ENCODE measurements at regions of chr12 and their contacts with region 1.

Region 1: GRCh38 chr12:121626087-121626852 is at the start of gene ORAI1:
- DNase-seq: peak; percentile 91 to 98 (median 95)
- ATAC-seq: peak; percentile 70
- H3K4me3 ChIP-seq: peak within 1 kb of the TSS; percentile 89
- H3K4me3 Mint-ChIP-seq: peak within 1 kb of the TSS; percentile 99
- H3K27ac ChIP-seq: peak within 1 kb of the TSS; percentile 90 to 96
- H3K27ac Mint-ChIP-seq: peak within 1 kb of the TSS; percentile 99
- H3K4me1 ChIP-seq: peaks cover 52% of the 10 kb centered on the region
- H3K4me1 Mint-ChIP-seq: peaks cover 53% of the 10 kb centered on the region
- H3K27me3 ChIP-seq: no peaks in the 10 kb centered on the region
- H3K27me3 Mint-ChIP-seq: no peaks in the 10 kb centered on the region
- CTCF ChIP-seq: no peak
- total RNA-seq, gene ORAI1: 39.7 to 42.3 TPM

Region 2: GRCh38 chr12:121467115-121467793 is 159.0 kb before region 1 on chr12:
- CTCF ChIA-PET with region 1: no interaction called
- POLR2A ChIA-PET with region 1: interaction called, 4 read pairs
- intact Hi-C with region 1: loop called in 1 of 2 experiments (anchors 1 kb)
- DNase-seq: peak; percentile 73 to 95 (median 88)
- ATAC-seq: peak; percentile 87
- H3K4me3 ChIP-seq: peak overlapping the region; percentile 49
- H3K4me3 Mint-ChIP-seq: no peak overlapping the region
- H3K27ac ChIP-seq: peak overlapping the region in 1 of 2 donors; percentile 43
- H3K27ac Mint-ChIP-seq: no peak overlapping the region
- H3K4me1 ChIP-seq: peaks cover 35% of the 10 kb centered on the region
- H3K4me1 Mint-ChIP-seq: peaks cover 39% of the 10 kb centered on the region
- H3K27me3 ChIP-seq: no peaks in the 10 kb centered on the region
- H3K27me3 Mint-ChIP-seq: no peaks in the 10 kb centered on the region
- CTCF ChIP-seq: no peak

Region 3: DNA sequence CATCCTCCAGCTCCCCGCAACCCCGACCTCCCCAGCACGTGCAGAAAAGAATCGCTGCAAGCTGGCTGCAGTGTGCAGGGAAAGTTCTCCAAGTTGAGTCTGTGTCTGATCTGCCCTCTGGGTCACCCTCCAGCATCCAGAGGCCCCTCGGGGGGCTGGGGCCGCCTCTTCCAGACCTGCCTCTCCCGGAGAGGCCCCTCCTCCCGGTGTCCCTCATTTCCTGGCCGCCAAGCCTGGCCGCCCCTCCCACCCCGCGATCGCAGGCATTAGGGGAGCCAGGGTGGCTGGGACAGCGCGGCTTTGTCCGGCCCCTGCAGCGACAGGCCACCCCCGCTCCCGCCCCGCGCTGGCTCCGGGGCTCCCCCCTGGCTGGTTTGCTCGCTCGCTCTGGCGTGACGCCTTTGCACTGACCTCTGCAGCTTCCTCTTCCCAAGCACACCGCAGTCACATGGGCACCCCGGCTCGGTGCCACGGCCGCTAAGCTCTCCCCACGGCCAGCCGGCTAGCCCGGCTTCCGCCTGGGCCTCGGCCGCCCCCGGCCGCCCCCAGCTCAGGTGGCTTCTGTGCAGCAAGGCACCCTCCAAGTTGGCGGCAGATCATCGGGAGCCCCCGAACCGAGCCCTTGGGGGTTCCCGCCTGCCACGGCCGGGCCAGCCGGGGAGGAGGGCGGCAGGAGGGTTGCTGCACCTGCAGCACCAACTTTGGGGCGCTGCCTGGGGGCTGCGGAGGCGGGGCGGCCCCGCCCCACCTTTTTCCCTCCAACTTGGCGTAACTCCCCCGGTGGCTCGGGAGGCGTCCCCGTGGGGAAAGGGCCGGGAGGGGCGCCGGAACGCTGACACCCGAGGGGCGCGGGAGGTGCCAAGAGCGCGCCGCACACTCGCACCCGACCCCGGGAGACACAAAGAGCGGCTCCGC is 89.1 kb before region 1 on chr12:
- CTCF ChIA-PET with region 1: interaction called, 5 read pairs
- POLR2A ChIA-PET with region 1: interaction called, 16 read pairs
- intact Hi-C with region 1: loop called in 1 of 2 experiments (anchors 1 kb)
- DNase-seq: peak in 13 of 14 experiments; percentile 16 to 84 (median 37)
- ATAC-seq: peak; percentile 10
- H3K4me3 ChIP-seq: peak overlapping the region; percentile 58
- H3K4me3 Mint-ChIP-seq: peak overlapping the region; percentile 94
- H3K27ac ChIP-seq: peak overlapping the region; percentile 67 to 80
- H3K27ac Mint-ChIP-seq: peak overlapping the region; percentile 93
- H3K4me1 ChIP-seq: peaks cover 60% of the 10 kb centered on the region
- H3K4me1 Mint-ChIP-seq: peaks cover 44% of the 10 kb centered on the region
- H3K27me3 ChIP-seq: no peaks in the 10 kb centered on the region
- H3K27me3 Mint-ChIP-seq: no peaks in the 10 kb centered on the region
- CTCF ChIP-seq: no peak

Region 4: GRCh38 chr12:121579981-121580868 is 46.0 kb before region 1 on chr12:
- CTCF ChIA-PET with region 1: interaction called, 20 read pairs
- POLR2A ChIA-PET with region 1: interaction called, 116 read pairs
- intact Hi-C with region 1: loop called (anchors 1 kb)
- DNase-seq: peak; percentile 64 to 89 (median 78)
- ATAC-seq: peak; percentile 64
- H3K4me3 ChIP-seq: peak overlapping the region; percentile 63
- H3K4me3 Mint-ChIP-seq: peak overlapping the region; percentile 98
- H3K27ac ChIP-seq: peak overlapping the region; percentile 62 to 79
- H3K27ac Mint-ChIP-seq: peak overlapping the region; percentile 98
- H3K4me1 ChIP-seq: peaks cover 52% of the 10 kb centered on the region
- H3K4me1 Mint-ChIP-seq: peaks cover 55% of the 10 kb centered on the region
- H3K27me3 ChIP-seq: no peaks in the 10 kb centered on the region
- H3K27me3 Mint-ChIP-seq: no peaks in the 10 kb centered on the region
- CTCF ChIP-seq: no peak

Region 5: GRCh38 chr12:121649819-121650353 is 23.6 kb after region 1 on chr12:
- CTCF ChIA-PET with region 1: interaction called, 3 read pairs
- POLR2A ChIA-PET with region 1: interaction called, 24 read pairs
- intact Hi-C with region 1: no loop called
- DNase-seq: peak in 3 of 14 experiments; percentile 68 to 79 (median 77)
- ATAC-seq: peak; percentile 67
- H3K4me3 ChIP-seq: no peak overlapping the region
- H3K4me3 Mint-ChIP-seq: no peak overlapping the region
- H3K27ac ChIP-seq: no peak overlapping the region
- H3K27ac Mint-ChIP-seq: peak overlapping the region; percentile 71
- H3K4me1 ChIP-seq: peaks cover 47% of the 10 kb centered on the region
- H3K4me1 Mint-ChIP-seq: peaks cover 27% of the 10 kb centered on the region
- H3K27me3 ChIP-seq: no peaks in the 10 kb centered on the region
- H3K27me3 Mint-ChIP-seq: no peaks in the 10 kb centered on the region
- CTCF ChIP-seq: no peak

Region 6: GRCh38 chr12:121678716-121679580 is 52.7 kb after region 1 on chr12:
- CTCF ChIA-PET with region 1: interaction called, 3 read pairs
- POLR2A ChIA-PET with region 1: interaction called, 10 read pairs
- intact Hi-C with region 1: loop called (anchors 1 to 2 kb)
- DNase-seq: no peak
- ATAC-seq: no peak
- H3K4me3 ChIP-seq: no peak overlapping the region
- H3K4me3 Mint-ChIP-seq: peak overlapping the region; percentile 63
- H3K27ac ChIP-seq: no peak overlapping the region
- H3K27ac Mint-ChIP-seq: peak overlapping the region; percentile 83
- H3K4me1 ChIP-seq: peaks cover 11% of the 10 kb centered on the region
- H3K4me1 Mint-ChIP-seq: peaks cover 5% of the 10 kb centered on the region
- H3K27me3 ChIP-seq: no peaks in the 10 kb centered on the region
- H3K27me3 Mint-ChIP-seq: no peaks in the 10 kb centered on the region
- CTCF ChIP-seq: no peak

Region 7: GRCh38 chr12:121748571-121749253 is 122.4 kb after region 1 on chr12:
- CTCF ChIA-PET with region 1: no interaction called
- POLR2A ChIA-PET with region 1: no interaction called
- intact Hi-C with region 1: no loop called
- DNase-seq: peak in 5 of 14 experiments; percentile 4 to 64 (median 23)
- ATAC-seq: peak; percentile 86
- H3K4me3 ChIP-seq: no peak overlapping the region
- H3K4me3 Mint-ChIP-seq: no peak overlapping the region
- H3K27ac ChIP-seq: no peak overlapping the region
- H3K27ac Mint-ChIP-seq: peak overlapping the region; percentile 78
- H3K4me1 ChIP-seq: peaks cover 17% of the 10 kb centered on the region
- H3K4me1 Mint-ChIP-seq: peaks cover 8% of the 10 kb centered on the region
- H3K27me3 ChIP-seq: no peaks in the 10 kb centered on the region
- H3K27me3 Mint-ChIP-seq: no peaks in the 10 kb centered on the region
- CTCF ChIP-seq: no peak

Region 8: DNA sequence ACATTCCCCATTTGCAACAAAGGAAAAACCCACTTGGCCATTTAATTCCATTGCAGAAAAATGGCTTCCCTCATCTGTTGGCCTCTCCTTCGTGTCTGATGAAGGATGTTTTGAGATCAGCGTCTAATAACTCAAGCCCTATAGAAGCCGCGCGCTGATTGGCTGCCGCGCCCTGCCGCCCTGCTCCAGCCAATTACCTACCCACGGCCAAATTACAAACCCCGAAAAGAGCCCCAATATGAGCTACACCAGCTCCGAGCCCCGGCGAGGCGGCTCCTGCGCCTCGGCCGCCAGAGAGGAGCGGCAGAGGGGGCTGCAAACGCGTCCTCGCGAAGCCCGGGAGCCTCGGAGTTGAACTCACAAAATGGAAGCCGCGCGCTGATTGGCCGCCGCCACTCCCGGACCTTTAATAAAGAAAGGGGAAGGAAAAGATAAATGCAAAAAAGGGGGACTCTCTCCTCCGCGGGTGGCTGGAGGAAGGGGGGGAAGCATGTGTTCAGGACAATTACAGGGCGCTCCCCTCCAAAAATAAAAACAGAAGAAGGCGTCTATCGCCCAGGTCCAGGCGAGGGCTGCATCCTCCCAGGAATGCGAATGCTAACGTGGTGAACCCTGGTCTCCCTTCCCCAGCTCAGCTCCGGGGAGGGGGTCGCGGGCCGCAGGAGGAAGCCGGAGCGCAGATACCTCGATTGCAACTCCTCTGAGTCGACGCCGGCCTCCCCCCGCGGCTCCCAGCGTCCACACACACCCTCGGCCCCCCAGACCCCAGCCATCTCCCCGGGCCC is 176.8 kb after region 1 on chr12:
- CTCF ChIA-PET with region 1: no interaction called
- POLR2A ChIA-PET with region 1: interaction called, 41 read pairs
- intact Hi-C with region 1: no loop called
- DNase-seq: peak; percentile 78 to 96 (median 85)
- ATAC-seq: peak; percentile 47
- H3K4me3 ChIP-seq: peak overlapping the region; percentile 100
- H3K4me3 Mint-ChIP-seq: peak overlapping the region; percentile 99
- H3K27ac ChIP-seq: peak overlapping the region; percentile 96 to 97
- H3K27ac Mint-ChIP-seq: peak overlapping the region; percentile 98
- H3K4me1 ChIP-seq: peaks cover 50% of the 10 kb centered on the region
- H3K4me1 Mint-ChIP-seq: peaks cover 44% of the 10 kb centered on the region
- H3K27me3 ChIP-seq: no peaks in the 10 kb centered on the region
- H3K27me3 Mint-ChIP-seq: no peaks in the 10 kb centered on the region
- CTCF ChIP-seq: no peak

Measured in CD4-positive, alpha-beta T cell (primary cell).